Activated naive CD4-positive, alpha-beta T cell treated with anti-CD3 and anti-CD28 coated beads for 36 hours (primary cell): ENCODE measurements at regions of chr6 and their contacts with region 1.

Region 1: GRCh38 chr6:52162940-52163908 is 23.0 kb upstream of the IL17A start:
- DNase-seq: peak; percentile 30
- H3K4me3 Mint-ChIP-seq: no peak overlapping the region
- H3K27ac Mint-ChIP-seq: peak overlapping the region; percentile 55
- H3K4me1 Mint-ChIP-seq: peaks cover 34% of the 10 kb centered on the region
- H3K27me3 Mint-ChIP-seq: peaks cover 18% of the 10 kb centered on the region

Region 2: DNA sequence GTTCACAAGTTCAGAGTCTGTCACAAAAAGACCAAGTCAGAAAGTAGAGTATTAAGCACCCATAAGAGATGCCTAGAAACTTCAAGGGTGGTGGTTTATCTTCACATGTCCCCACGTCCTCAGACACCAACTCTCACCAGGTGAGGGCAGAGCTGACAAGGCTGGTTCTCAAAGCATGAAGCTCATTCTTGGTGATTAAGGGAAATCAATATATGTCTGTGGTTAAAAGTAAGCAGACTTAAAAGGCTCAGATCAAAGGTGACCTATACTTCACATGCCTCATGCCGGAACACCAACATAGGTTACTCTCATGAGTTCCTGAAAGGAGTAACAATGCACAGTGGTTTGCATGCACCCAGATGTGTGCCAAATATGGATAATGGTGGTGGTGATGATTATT is 49.9 kb after region 1 on chr6:
- CTCF ChIA-PET with region 1: interaction called, 9 read pairs
- intact Hi-C with region 1: loop called (anchors 1 kb)
- DNase-seq: peak; percentile 68
- H3K4me3 Mint-ChIP-seq: no peak overlapping the region
- H3K27ac Mint-ChIP-seq: no peak overlapping the region
- H3K4me1 Mint-ChIP-seq: peaks cover 11% of the 10 kb centered on the region
- H3K27me3 Mint-ChIP-seq: peaks cover 8% of the 10 kb centered on the region

Region 3: DNA sequence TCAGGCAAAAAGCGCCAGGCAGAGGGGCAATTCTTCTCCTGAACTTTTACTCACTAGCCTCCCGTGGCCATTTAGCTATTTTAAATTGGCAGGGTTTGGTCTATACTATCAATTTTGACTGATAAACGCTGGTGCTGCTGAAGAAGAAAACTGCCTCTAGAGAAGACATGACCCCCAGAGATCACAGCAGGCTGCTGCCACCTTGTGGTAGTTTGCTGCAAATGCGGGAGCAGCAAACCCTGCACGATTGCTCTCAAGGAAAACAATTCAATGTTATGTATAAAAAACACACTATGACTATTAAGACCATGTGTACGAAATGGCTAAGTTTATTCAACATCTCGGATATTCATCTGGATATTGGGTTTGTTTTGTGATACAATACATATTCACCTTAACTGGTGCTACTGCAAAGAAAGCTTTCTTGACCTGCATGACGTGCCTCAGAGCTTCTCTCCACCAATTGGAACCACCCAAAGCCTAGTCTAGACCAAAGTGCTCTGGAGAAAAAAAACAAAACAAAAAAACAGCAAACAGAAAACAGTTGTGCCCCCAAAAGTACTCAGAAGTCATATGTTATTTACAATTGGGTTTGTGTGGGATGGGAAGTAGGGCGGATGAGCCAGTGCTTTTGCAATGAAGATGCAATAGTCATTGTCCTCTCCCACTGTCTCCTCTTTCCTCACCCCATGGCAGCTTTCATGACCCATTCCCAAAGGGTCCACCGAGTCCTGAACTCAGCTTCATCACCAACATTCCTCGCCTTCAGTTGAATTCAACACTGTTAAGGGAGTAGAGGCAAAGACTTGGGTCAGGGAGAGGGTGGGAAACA is 100.7 kb after region 1 on chr6:
- CTCF ChIA-PET with region 1: interaction called, 115 read pairs
- intact Hi-C with region 1: loop called (anchors 1 kb)
- DNase-seq: peak; percentile 84
- H3K4me3 Mint-ChIP-seq: no peak overlapping the region
- H3K27ac Mint-ChIP-seq: peak overlapping the region; percentile 23
- H3K4me1 Mint-ChIP-seq: peaks cover 15% of the 10 kb centered on the region
- H3K27me3 Mint-ChIP-seq: no peaks in the 10 kb centered on the region

Region 4: DNA sequence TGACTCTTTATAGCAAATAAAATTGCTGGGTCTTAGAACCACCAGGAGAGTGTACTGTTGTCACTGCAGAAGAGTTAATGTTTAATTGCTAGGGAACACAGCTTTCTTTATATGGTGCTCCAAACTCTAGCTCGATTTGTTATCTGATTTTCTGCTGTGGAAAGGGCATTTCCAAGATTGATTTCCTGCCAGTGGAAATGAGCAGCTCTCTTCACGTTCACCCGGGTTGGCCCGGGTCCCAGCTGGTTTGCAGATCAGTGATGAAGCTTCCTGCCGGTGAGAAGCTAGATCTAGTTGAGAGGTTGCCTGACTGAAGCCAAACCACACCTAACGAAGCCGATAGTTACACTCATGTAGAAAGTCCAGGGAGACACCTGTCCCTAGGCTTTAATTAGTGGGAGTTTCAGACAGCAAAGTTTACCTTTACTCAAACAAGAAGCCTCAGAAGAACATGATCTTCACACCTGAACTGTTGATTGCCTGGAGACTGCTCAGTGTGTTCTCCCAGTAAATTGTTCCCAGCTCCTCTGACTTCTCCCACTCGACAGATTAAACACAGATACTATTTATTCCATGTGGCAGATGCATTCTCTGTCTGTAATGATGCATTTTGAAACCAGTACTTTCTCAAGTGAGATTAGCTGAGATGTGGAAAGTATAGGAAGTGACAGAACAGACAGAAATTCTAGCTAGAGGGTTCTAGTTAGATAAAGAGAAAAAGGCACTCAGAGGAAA is 226.6 kb after region 1 on chr6:
- CTCF ChIA-PET with region 1: interaction called, 4 read pairs
- intact Hi-C with region 1: loop called (anchors 1 kb)
- DNase-seq: peak; percentile 79
- H3K4me3 Mint-ChIP-seq: peak overlapping the region; percentile 14
- H3K27ac Mint-ChIP-seq: peak overlapping the region; percentile 81
- H3K4me1 Mint-ChIP-seq: peaks cover 75% of the 10 kb centered on the region
- H3K27me3 Mint-ChIP-seq: no peaks in the 10 kb centered on the region

Region 5: DNA sequence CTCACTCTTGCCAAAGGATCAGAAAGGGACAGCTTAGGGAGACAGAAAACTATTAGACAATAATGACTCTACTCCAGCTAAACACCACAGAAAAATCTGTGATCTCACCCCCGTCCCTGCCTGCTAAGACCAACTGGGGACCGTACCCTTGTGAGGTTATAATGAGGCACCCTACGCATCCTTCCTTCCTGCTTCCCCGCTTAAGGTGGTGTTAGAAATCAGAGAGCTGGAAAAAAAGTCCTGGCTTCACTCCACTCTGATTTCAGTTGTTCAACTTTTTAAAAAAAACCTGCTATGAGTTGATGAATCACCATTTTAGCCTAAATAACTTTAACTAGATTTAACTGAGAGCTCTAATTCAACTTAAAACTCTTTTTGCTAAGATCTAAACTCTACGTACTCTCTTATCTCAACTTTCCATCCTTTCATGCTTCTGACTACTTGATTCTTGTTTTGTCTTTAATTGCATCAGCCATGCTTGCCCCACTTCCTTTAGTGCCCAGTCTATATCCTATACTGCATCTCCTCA is 471.9 kb after region 1 on chr6:
- CTCF ChIA-PET with region 1: no interaction called
- intact Hi-C with region 1: loop called (anchors 1 kb)
- DNase-seq: peak; percentile 75
- H3K4me3 Mint-ChIP-seq: peak overlapping the region; percentile 25
- H3K27ac Mint-ChIP-seq: peak overlapping the region; percentile 67
- H3K4me1 Mint-ChIP-seq: peaks cover 18% of the 10 kb centered on the region
- H3K27me3 Mint-ChIP-seq: peaks cover 5% of the 10 kb centered on the region

Region 6: GRCh38 chr6:53064726-53065215 is 901.5 kb after region 1 on chr6:
- CTCF ChIA-PET with region 1: no interaction called
- intact Hi-C with region 1: loop called (anchors 2 kb)
- DNase-seq: peak; percentile 99
- H3K4me3 Mint-ChIP-seq: peak overlapping the region; percentile 97
- H3K27ac Mint-ChIP-seq: peak overlapping the region; percentile 99
- H3K4me1 Mint-ChIP-seq: peaks cover 55% of the 10 kb centered on the region
- H3K27me3 Mint-ChIP-seq: no peaks in the 10 kb centered on the region